ENCODE measurements at regions of chr7 and their contacts with region 1.

Region 1: DNA sequence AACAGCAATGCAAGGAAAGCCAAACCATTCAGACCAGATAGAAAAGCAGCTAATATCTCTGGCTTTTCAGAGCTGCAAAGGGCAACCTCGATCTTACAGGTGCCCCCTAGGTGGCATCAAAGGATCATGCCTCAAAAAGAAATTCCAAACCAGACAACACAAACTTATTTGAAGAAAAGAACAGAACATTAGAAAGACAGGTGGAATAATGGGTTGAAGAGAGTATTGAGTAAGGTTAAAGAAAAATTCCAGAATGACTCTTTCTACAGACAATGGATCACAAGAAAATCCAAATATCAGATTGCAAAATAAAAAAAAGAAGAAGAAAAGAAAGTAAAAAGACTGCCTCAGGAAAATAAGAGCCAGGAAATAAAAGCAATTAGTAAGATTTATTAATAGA is 213.7 kb downstream of the ELMO1 start:
- DNase-seq: peak; percentile 31 to 48
- ATAC-seq: peak; percentile 73 to 76; a peak in 5 of 6 replicates
- H3K4me3 ChIP-seq: no peak overlapping the region
- H3K27ac ChIP-seq: no peak overlapping the region; a peak in 1 of 6 replicates
- H3K4me1 ChIP-seq: no peaks in the 10 kb centered on the region
- CTCF ChIP-seq: peak; percentile 84
- EP300 ChIP-seq: no peak
- POLR2A ChIP-seq: no peak
- RAD21 ChIP-seq: peak; percentile 84 to 90

Region 2: DNA sequence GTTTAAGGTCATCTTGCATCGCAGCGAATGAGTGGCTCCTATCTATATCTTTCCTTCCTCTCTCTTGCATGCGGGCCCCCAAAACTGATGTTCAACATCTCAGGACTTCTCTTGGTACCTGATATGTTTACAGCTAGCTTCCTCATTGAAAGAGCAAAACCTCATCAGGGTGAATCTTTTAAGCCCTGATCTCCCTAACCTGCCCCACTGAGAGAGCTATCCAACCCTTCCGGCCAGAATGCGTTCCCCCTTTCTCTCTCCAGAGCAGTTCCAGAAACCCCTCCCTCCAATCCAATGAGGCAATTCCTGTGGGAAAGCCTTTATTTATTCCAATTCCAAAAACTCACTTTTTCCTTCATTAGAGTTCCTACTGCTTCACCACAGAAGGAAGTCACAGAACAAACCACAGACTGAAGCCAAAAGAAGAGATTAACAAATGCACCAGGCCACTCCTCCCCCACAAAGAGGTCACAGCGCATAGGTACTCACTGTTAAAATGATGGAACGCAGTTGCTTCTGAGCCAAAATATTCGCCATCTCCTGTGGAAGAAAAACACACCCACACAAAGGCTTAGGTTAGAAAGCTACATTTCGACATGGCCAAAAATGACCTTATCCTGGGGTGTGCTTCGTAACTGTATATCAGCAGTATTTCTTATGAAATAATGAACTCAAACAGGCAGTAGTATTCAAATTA is 18.6 kb before region 1 on chr7:
- CTCF ChIA-PET with region 1: interaction called, 32 read pairs
- POLR2A ChIA-PET with region 1: no interaction called
- DNase-seq: no peak
- ATAC-seq: no peak
- H3K4me3 ChIP-seq: no peak overlapping the region
- H3K27ac ChIP-seq: no peak overlapping the region
- H3K4me1 ChIP-seq: no peaks in the 10 kb centered on the region
- CTCF ChIP-seq: no peak
- EP300 ChIP-seq: no peak
- POLR2A ChIP-seq: no peak
- RAD21 ChIP-seq: no peak

Region 3: DNA sequence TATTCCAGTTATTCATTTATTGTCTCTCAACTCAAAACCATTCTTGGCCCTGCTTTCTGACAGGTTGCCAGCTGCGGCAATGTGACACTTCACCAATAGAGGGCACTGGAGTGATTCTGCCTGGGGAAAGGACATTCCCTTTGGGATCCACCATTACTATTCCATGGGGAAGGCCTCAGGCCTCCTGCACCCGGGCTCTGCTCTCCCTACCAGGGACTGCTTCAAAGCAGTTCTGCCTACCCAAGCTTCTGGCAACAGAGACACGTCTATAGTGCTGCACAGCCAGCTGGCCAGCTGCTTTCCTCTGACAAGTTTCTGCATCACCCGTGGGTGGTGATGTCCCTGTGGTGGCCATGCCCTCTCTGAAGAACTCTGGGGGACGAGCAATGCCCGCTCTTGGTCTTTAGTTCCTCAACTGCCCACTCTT is 49.9 kb after region 1 on chr7:
- CTCF ChIA-PET with region 1: interaction called, 10 read pairs
- POLR2A ChIA-PET with region 1: no interaction called
- DNase-seq: peak; percentile 29 to 53
- ATAC-seq: peak in 1 of 2 experiments; percentile 79; a peak in 3 of 6 replicates
- H3K4me3 ChIP-seq: no peak overlapping the region
- H3K27ac ChIP-seq: 0 out of 6 replicates have a peak overlapping the region, but pooled peaks of 1 of the 2 experiments have one; percentile 16
- H3K4me1 ChIP-seq: peaks cover 8% of the 10 kb centered on the region; the same call in 2 of the 3 replicates
- CTCF ChIP-seq: peak; percentile 64
- EP300 ChIP-seq: no peak
- POLR2A ChIP-seq: no peak
- RAD21 ChIP-seq: peak; percentile 75 to 81

Region 4: GRCh38 chr7:37495574-37496184 is 260.8 kb after region 1 on chr7:
- CTCF ChIA-PET with region 1: interaction called, 16 read pairs
- POLR2A ChIA-PET with region 1: no interaction called
- DNase-seq: peak; percentile 13 to 33
- ATAC-seq: 0 out of 6 replicates have a peak, but pooled peaks of 1 of the 2 experiments have one; percentile 33
- H3K4me3 ChIP-seq: no peak overlapping the region
- H3K27ac ChIP-seq: no peak overlapping the region
- H3K4me1 ChIP-seq: no peaks in the 10 kb centered on the region
- CTCF ChIP-seq: peak; percentile 58
- EP300 ChIP-seq: no peak
- POLR2A ChIP-seq: no peak
- RAD21 ChIP-seq: peak; percentile 44 to 47

Region 5: GRCh38 chr7:37833107-37833817 is 598.3 kb after region 1 on chr7:
- CTCF ChIA-PET with region 1: interaction called, 18 read pairs
- POLR2A ChIA-PET with region 1: no interaction called
- DNase-seq: peak; percentile 49 to 73
- ATAC-seq: peak; percentile 39 to 67; a peak in 4 of 6 replicates
- H3K4me3 ChIP-seq: peak overlapping the region; percentile 31
- H3K27ac ChIP-seq: peak overlapping the region; percentile 63 to 82
- H3K4me1 ChIP-seq: peaks cover 10% of the 10 kb centered on the region; the same call in 1 of the 3 replicates
- CTCF ChIP-seq: peak; percentile 85
- EP300 ChIP-seq: no peak
- POLR2A ChIP-seq: no peak
- RAD21 ChIP-seq: peak; percentile 78 to 84

Measured in A549 (cell line).